ENCODE measurements at regions of chr20 and their contacts with region 1.

Region 1: GRCh38 chr20:34704177-34705007 is at the start of gene TP53INP2:
- DNase-seq: peak; percentile 95
- ATAC-seq: peak; percentile 57
- H3K4me3 ChIP-seq: peak within 1 kb of the TSS; percentile 68 to 89 (median 81)
- H3K4me3 Mint-ChIP-seq: peak within 1 kb of the TSS; percentile 95
- H3K27ac ChIP-seq: peak within 1 kb of the TSS; percentile 52 to 95
- H3K27ac Mint-ChIP-seq: peak within 1 kb of the TSS; percentile 93
- H3K4me1 ChIP-seq: peaks cover 18 to 26% of the 10 kb centered on the region in 2 donors
- H3K4me1 Mint-ChIP-seq: peaks cover 26% of the 10 kb centered on the region
- H3K27me3 ChIP-seq: peaks cover 0 to 15% (median 0%) of the 10 kb centered on the region in 4 experiments
- H3K27me3 Mint-ChIP-seq: peaks cover 9% of the 10 kb centered on the region
- CTCF ChIP-seq: no peak
- total RNA-seq, gene TP53INP2: 7.7 and 8.1 TPM in 2 replicates

Region 2: GRCh38 chr20:34302723-34303528 is 401.5 kb before region 1 on chr20 and contains the start of gene AHCY:
- CTCF ChIA-PET with region 1: interaction called, 3 read pairs
- POLR2A ChIA-PET with region 1: no interaction called
- intact Hi-C with region 1: loop called (anchors 1 kb)
- DNase-seq: peak; percentile 96
- ATAC-seq: peak; percentile 92
- H3K4me3 ChIP-seq: peak within 1 kb of the TSS; percentile 65 to 93 (median 85)
- H3K4me3 Mint-ChIP-seq: peak within 1 kb of the TSS; percentile 97
- H3K27ac ChIP-seq: peak within 1 kb of the TSS; percentile 75 to 87
- H3K27ac Mint-ChIP-seq: peak within 1 kb of the TSS; percentile 95
- H3K4me1 ChIP-seq: peaks cover 4 to 18% of the 10 kb centered on the region in 2 donors
- H3K4me1 Mint-ChIP-seq: peaks cover 19% of the 10 kb centered on the region
- H3K27me3 ChIP-seq: no peaks in the 10 kb centered on the region
- H3K27me3 Mint-ChIP-seq: no peaks in the 10 kb centered on the region
- CTCF ChIP-seq: peak; percentile 13
- total RNA-seq, gene AHCY: 43.6 and 43.8 TPM in 2 replicates

Region 3: DNA sequence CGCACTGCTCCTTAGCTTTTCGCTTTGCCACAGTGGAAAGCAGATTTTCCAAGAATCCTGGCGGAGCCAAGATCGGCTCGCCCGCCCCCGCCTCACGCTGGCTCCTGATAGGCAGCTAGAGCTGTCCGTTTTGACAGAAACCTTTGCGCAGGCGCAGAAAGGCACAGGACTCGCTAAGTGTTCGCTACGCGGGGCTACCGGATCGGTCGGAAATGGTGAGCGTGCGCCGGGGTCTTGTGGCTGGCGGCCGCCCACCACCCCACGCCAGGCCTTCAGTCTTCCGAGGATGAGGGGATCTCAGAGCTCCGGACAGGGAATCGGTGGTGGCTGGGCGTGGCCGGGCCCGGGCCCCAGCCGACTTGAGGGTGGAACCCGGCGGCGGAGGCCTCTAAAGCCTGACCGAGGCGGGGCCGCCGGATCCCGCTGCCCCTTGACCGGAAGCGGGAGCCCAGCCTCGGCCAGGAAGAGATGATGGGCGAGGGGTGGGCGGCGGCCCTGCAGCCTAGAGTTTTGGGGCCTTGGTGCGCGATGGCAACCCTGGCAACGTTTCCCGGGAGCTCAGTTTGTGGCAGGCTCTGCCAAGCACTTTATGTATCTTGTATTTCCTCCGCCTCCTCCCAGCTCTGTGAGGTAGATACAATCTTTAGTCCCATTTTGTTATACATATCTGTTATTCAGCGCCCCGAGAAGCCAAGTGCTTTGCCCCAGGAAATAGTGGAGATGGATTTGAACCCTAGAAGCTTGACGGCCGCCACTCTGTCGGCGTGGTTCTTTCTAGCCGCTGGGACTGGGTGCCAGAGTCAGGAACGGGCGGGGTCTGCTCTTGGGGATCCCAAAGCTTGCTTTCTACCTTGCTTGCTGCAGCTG is 187.9 kb before region 1 on chr20 and contains the start of gene DYNLRB1:
- CTCF ChIA-PET with region 1: interaction called, 6 read pairs
- POLR2A ChIA-PET with region 1: interaction called, 12 read pairs
- intact Hi-C with region 1: loop called (anchors 1 kb)
- DNase-seq: peak; percentile 95
- ATAC-seq: peak; percentile 83
- H3K4me3 ChIP-seq: peak within 1 kb of the TSS; percentile 66 to 99 (median 95)
- H3K4me3 Mint-ChIP-seq: peak within 1 kb of the TSS; percentile 97
- H3K27ac ChIP-seq: peak within 1 kb of the TSS; percentile 31 to 85
- H3K27ac Mint-ChIP-seq: peak within 1 kb of the TSS; percentile 97
- H3K4me1 ChIP-seq: peaks cover 5 to 10% of the 10 kb centered on the region in 2 donors
- H3K4me1 Mint-ChIP-seq: peaks cover 47% of the 10 kb centered on the region
- H3K27me3 ChIP-seq: no peaks in the 10 kb centered on the region
- H3K27me3 Mint-ChIP-seq: no peaks in the 10 kb centered on the region
- CTCF ChIP-seq: no peak
- total RNA-seq, gene DYNLRB1: 43.8 and 55.3 TPM in 2 replicates

Region 4: GRCh38 chr20:34558320-34559218 is 145.8 kb before region 1 on chr20 and contains the start of gene MAP1LC3A:
- CTCF ChIA-PET with region 1: interaction called, 10 read pairs
- POLR2A ChIA-PET with region 1: no interaction called
- intact Hi-C with region 1: loop called (anchors 1 kb)
- DNase-seq: peak; percentile 98
- ATAC-seq: peak; percentile 89
- H3K4me3 ChIP-seq: peak within 1 kb of the TSS; percentile 50 to 94 (median 77)
- H3K4me3 Mint-ChIP-seq: peak within 1 kb of the TSS; percentile 85
- H3K27ac ChIP-seq: peak within 1 kb of the TSS; percentile 72 to 86
- H3K27ac Mint-ChIP-seq: peak within 1 kb of the TSS; percentile 92
- H3K4me1 ChIP-seq: peaks cover 8 to 14% of the 10 kb centered on the region in 2 donors
- H3K4me1 Mint-ChIP-seq: peaks cover 13% of the 10 kb centered on the region
- H3K27me3 ChIP-seq: no peaks in the 10 kb centered on the region
- H3K27me3 Mint-ChIP-seq: no peaks in the 10 kb centered on the region
- CTCF ChIP-seq: no peak
- total RNA-seq, gene MAP1LC3A: 3.5 and 4.5 TPM in 2 replicates

Region 5: GRCh38 chr20:34720266-34720665 is 15.9 kb after region 1 on chr20:
- CTCF ChIA-PET with region 1: interaction called, 16 read pairs
- POLR2A ChIA-PET with region 1: no interaction called
- intact Hi-C with region 1: no loop called
- DNase-seq: no peak
- ATAC-seq: no peak
- H3K4me3 ChIP-seq: no peak overlapping the region
- H3K4me3 Mint-ChIP-seq: no peak overlapping the region
- H3K27ac ChIP-seq: no peak overlapping the region
- H3K27ac Mint-ChIP-seq: no peak overlapping the region
- H3K4me1 ChIP-seq: peaks cover 0 to 5% of the 10 kb centered on the region in 2 donors
- H3K4me1 Mint-ChIP-seq: peaks cover 18% of the 10 kb centered on the region
- H3K27me3 ChIP-seq: no peaks in the 10 kb centered on the region
- H3K27me3 Mint-ChIP-seq: no peaks in the 10 kb centered on the region
- CTCF ChIP-seq: no peak

Region 6: GRCh38 chr20:34955232-34956040 is 251.0 kb after region 1 on chr20 and contains the starts of genes GSS and MYH7B:
- CTCF ChIA-PET with region 1: no interaction called
- POLR2A ChIA-PET with region 1: no interaction called
- intact Hi-C with region 1: loop called (anchors 1 kb)
- DNase-seq: peak; percentile 95
- ATAC-seq: peak; percentile 93
- H3K4me3 ChIP-seq: peak within 1 kb of the TSS; percentile 58 to 88 (median 73)
- H3K4me3 Mint-ChIP-seq: peak within 1 kb of the TSS; percentile 97
- H3K27ac ChIP-seq: peak within 1 kb of the TSS; percentile 42 to 79
- H3K27ac Mint-ChIP-seq: peak within 1 kb of the TSS; percentile 93
- H3K4me1 ChIP-seq: peaks cover 5 to 16% of the 10 kb centered on the region in 2 donors
- H3K4me1 Mint-ChIP-seq: peaks cover 25% of the 10 kb centered on the region
- H3K27me3 ChIP-seq: no peaks in the 10 kb centered on the region
- H3K27me3 Mint-ChIP-seq: no peaks in the 10 kb centered on the region
- CTCF ChIP-seq: no peak
- total RNA-seq, gene GSS: 22.0 and 22.5 TPM in 2 replicates
- total RNA-seq, gene MYH7B: 0.66 and 0.79 TPM in 2 replicates